Dendritic cell treated with granulocyte-macrophage colony-stimulating factor and Interleukin-4, amounts not matched to agents 40 ng/mL and 50 ng/mL, for 4 days (primary cell): ENCODE measurements at regions of chr4 and their contacts with region 1.

Region 1: GRCh38 chr4:4248029-4248884 is at the start of gene TMEM128:
- H3K4me3 Mint-ChIP-seq: peak within 1 kb of the TSS; percentile 95
- H3K27ac Mint-ChIP-seq: peak within 1 kb of the TSS; percentile 97
- H3K4me1 Mint-ChIP-seq: peaks cover 30% of the 10 kb centered on the region
- H3K27me3 Mint-ChIP-seq: peaks cover 11% of the 10 kb centered on the region

Region 2: DNA sequence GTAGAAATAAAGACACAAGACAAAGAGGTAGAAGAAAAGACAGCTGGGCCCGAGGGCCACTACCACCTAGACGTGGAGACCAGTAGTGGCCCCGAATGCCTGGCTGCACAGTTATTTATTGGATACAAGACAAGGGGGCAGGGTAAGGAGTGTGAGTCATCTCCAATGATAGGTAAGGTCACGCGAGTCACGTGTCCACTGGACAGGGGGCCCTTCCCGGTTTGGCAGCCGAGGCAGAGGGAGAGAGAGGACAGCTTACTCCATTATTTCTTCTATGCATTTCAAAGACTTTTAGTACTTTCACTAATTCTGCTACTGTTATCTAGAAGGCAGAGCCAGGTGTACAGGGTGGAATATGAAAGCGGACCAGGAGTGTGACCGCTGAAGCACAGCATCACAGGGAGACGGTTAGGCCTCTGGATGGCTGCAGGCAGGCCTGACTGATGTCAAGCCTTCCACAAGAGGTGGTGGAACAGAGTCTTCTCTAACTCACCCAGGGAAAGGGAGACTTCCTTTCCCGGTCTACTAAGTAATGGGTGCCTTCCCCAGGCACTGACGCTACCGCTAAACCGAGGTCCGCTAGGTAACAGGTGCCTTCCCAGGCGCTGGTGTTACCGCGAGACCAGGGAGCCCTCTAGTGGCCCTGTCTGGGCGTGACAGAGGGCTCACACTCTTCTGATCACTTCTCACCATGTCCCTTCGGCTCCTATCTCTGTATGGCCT is 86.7 kb after region 1 on chr4:
- intact Hi-C with region 1: loop called (anchors 1 kb)
- H3K4me3 Mint-ChIP-seq: no peak overlapping the region
- H3K27ac Mint-ChIP-seq: no peak overlapping the region
- H3K4me1 Mint-ChIP-seq: no peaks in the 10 kb centered on the region
- H3K27me3 Mint-ChIP-seq: peaks cover 8% of the 10 kb centered on the region

Region 3: DNA sequence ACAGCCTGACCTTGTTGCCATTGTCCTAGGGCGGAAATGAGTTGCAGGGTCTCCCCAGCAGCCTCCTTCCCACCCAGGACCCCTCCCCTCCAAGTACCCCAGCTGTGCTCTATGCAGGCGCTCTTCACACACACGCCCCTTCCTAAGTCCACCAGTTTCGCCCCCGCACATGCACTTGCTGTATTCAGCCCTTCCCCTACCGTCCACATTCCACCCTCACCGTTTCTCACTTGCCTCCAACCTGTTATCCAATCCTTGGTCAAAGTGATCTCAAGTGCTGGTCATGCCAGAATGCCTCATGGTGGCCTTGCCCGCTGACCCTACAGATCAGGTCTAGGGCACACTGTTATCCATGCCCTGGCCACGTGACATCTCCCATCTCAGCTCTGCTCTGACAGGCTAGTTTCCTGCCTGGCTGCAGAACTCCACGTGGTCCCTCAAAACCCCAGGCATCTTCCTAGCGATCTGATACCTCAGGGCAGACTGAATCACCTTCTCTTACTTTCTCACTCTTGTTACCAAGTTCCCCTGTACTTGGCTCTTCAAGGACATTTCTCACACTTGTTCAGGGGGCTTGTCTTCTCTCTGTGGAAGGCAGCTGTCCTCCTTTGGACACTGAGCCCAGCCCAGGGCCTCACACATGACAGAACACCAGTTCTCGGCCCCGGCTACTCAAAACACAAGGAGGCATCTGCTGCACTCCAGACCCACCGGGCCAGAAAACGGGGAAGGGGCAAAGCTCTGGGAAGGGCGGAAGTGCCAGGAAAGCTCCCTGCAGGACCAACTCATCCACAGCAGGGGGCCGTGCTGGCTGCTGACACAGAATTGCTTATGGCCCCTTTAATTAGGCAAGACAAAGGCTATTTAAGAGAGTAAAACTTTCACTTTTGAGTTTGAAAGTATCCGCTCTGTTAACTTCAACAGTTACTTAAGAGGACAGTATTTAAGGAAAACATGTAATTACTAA is 178.5 kb after region 1 on chr4:
- intact Hi-C with region 1: loop called (anchors 10 kb)
- H3K4me3 Mint-ChIP-seq: no peak overlapping the region
- H3K27ac Mint-ChIP-seq: no peak overlapping the region
- H3K4me1 Mint-ChIP-seq: no peaks in the 10 kb centered on the region
- H3K27me3 Mint-ChIP-seq: no peaks in the 10 kb centered on the region